ENCODE measurements at regions of chr11 and their contacts with region 1.

Region 1: DNA sequence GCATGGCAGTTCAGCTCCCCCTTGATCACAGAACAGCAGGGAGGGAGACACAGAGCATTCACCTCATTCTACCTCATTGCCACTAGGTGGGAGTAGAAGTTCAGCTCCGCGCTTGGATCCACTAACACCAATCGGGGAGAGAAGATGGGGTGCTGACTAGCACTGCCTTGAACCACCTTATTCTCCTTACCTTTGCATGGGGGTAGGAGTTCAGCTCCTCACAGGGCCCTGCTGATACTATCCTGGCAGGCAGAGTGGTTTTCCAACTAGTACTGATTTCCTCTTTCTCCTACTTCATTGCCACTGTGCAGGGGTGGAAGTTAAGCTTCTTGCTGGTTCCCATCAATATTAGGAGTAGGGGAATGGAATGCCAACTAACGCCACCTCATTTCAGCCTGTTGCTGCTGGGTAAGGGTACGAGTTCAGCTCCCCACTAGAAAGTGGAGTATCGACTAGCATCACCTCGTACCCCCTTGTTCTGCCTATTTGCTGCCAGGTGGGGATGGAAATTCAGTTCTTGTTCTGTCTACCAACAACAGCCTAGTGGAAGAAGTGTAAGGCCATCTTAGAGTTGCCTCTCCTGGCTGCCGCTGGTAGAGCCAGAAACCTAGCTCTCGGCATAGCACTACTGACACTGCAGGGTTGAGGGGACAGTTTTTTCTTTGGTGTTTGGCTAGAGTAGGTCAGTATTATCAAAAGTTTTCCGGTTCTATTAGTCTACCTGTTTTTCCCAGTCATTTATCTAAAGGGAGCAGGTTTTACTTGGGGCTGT is 550.9 kb upstream of the CCDC90B start:
- DNase-seq: peak in 8 of 10 donors; percentile 15 to 68 (median 58)
- H3K4me3 ChIP-seq: no peak overlapping the region
- H3K27ac ChIP-seq: peak overlapping the region; percentile 46 to 97 (median 88)
- H3K27me3 ChIP-seq: no peaks in the 10 kb centered on the region
- CTCF ChIP-seq: peak; percentile 28 to 88 (median 76)

Region 2: DNA sequence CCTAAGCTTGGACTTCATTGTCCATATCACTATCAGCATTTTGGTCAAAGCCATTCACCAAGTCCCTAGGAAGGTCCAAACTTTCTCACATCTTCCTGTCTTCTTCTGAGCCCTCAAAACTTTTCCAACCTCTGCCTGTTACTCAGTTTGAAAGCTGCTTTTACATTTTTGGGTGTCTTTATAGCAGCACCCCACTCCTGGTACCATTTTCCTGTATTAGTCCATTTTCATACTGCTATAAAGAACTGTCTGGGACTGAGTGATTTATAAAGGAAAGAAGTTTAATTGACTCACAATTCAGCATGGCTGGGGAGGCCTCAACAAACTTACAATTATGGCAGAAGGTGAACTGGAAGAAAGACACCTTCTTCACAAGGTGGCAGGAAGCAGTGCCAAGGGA is 166.1 kb after region 1 on chr11:
- intact Hi-C with region 1: loop called in 1 of 2 experiments (anchors 10 kb)
- DNase-seq: no peak
- H3K4me3 ChIP-seq: no peak overlapping the region
- H3K27ac ChIP-seq: no peak overlapping the region
- H3K27me3 ChIP-seq: no peaks in the 10 kb centered on the region
- CTCF ChIP-seq: no peak

Region 3: DNA sequence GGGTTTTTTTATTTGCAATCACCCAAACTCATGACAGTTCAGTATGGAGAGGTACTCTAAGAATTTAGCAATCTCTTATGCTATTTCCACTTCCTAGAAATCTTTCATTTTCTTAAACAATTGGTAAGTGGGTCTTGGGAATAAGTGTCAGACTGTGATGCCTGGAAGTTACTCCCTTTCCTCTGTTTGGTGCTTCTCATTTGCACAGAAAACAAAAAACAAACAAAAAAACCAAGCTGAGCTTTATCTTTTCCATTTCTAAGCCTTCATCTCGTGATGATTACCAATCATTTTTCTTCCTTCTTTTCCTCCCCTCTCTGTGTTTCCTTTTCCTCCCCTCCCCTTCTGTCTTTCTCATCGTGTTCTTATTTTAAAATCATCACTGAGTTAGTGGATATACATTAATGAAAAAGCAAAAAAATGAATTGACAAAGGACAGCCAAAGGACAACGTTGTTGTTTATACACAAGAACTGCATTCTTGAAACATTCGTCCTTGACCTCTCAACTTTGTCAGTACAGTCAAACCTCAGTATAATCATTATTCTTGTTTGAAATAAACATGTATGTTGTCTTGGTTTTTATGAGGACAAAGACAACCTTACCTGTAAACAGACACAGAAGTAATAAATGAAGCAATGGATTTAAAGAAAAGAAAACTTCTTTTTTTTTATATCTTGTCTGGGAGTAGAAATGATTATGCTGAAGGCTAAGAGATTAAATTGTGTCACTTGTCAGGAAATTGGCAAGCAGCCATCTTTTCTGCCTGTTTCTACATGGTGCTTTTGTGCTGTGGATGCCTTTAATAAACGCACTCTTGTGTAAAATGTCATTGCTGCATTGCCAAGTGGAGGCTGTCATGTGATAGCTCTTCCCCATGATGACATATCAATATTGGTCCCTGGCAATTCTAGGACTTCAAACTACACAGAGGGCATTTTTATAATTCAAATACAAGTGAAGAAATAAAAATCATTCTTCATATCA is 252.3 kb after region 1 on chr11:
- intact Hi-C with region 1: loop called (anchors 10 kb)
- DNase-seq: peak in 4 of 10 donors; percentile 28 to 74 (median 50)
- H3K4me3 ChIP-seq: peak overlapping the region in 4 of 59 donors; percentile 9 to 19 (median 16)
- H3K27ac ChIP-seq: peak overlapping the region; percentile 5 to 96 (median 85)
- H3K27me3 ChIP-seq: no peaks in the 10 kb centered on the region
- CTCF ChIP-seq: peak in 2 of 56 donors; percentile 23 to 28

Region 4: DNA sequence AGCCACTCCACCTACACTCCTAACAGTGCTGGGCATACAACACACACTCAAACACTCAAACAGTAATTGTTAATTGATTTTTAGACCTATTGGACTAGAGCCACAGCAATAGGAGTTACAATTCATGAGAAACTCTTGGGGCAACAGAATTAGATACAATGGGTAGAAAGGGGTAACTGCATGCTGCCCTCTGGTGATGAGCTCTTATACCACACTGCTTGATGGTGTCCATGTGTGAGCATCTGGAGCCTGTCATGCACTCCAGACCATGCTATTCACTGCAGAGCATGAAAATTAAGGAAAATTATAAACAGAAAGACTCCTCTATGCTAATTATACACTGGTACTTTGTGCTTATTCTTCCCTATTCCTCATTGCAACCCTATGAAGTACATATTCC is 424.6 kb after region 1 on chr11:
- intact Hi-C with region 1: loop called (anchors 5 kb)
- DNase-seq: peak in 1 of 10 donors; percentile 52
- H3K4me3 ChIP-seq: no peak overlapping the region
- H3K27ac ChIP-seq: peak overlapping the region; percentile 8 to 100 (median 97)
- H3K27me3 ChIP-seq: no peaks in the 10 kb centered on the region
- CTCF ChIP-seq: peak in 49 of 56 donors; percentile 11 to 68 (median 40)

Region 5: GRCh38 chr11:84524422-84525051 is 687.5 kb after region 1 on chr11:
- intact Hi-C with region 1: loop called (anchors 2 to 5 kb)
- DNase-seq: no peak
- H3K4me3 ChIP-seq: peak overlapping the region in 2 of 59 donors; percentile 5 to 11
- H3K27ac ChIP-seq: peak overlapping the region in 30 of 59 donors; percentile 4 to 82 (median 42)
- H3K27me3 ChIP-seq: no peaks in the 10 kb centered on the region
- CTCF ChIP-seq: peak; percentile 53 to 89 (median 74)